ENCODE measurements at regions of chr10 and their contacts with region 1.

Region 1: DNA sequence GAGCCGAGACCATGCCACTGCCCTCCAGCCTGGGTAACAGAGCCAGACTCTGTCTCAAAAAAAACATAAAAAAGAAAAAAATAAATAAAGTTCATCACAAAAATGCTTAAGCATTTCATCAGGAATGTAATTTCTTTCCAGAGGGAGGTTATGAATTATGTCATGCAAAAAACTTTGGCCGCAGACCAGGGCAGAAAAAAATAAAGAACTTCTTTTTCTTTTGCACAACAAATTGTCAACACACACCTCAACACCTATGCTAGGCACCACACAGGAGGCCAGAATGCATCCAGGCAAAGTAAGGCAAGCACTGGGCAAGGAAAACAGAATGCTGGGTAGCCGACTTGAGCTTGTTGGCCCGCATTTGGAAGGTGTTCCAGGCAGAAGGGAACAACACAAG is 3.9 kb downstream of the C10orf62 start:
- DNase-seq: no peak
- H3K4me3 ChIP-seq: no peak overlapping the region
- H3K27ac ChIP-seq: peak overlapping the region; percentile 83 to 93
- H3K4me1 ChIP-seq: peaks cover 0 to 56% (median 34%) of the 10 kb centered on the region in 4 donors
- H3K27me3 ChIP-seq: no peaks in the 10 kb centered on the region
- CTCF ChIP-seq: no peak

Region 2: DNA sequence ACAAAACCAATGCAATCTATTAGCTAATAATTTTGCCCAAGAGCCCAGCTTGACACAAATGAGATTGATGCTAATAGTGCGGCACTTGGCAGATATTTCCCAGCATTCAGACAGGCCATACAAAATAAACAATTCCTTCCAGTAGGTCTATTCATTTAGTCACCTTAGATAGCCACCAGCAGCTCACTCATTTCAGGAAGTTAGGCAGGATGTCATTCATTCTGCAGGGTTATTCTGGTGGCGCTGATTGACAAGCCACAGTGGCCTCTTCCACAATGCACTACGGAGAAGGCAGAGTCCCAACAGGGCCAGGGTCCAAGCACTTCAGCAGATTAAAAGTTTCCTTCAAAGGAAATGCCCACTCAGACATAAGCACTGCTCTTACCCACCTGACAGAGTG is 928.9 kb before region 1 on chr10:
- intact Hi-C with region 1: loop called (anchors 5 kb)
- DNase-seq: no peak
- H3K4me3 ChIP-seq: no peak overlapping the region
- H3K27ac ChIP-seq: no peak overlapping the region
- H3K4me1 ChIP-seq: no peaks in the 10 kb centered on the region
- H3K27me3 ChIP-seq: no peaks in the 10 kb centered on the region
- CTCF ChIP-seq: no peak

Region 3: GRCh38 chr10:97623277-97623676 is 29.9 kb after region 1 on chr10:
- intact Hi-C with region 1: no loop called
- DNase-seq: no peak
- H3K4me3 ChIP-seq: no peak overlapping the region
- H3K27ac ChIP-seq: no peak overlapping the region
- H3K4me1 ChIP-seq: no peaks in the 10 kb centered on the region
- H3K27me3 ChIP-seq: no peaks in the 10 kb centered on the region
- CTCF ChIP-seq: no peak

Region 4: DNA sequence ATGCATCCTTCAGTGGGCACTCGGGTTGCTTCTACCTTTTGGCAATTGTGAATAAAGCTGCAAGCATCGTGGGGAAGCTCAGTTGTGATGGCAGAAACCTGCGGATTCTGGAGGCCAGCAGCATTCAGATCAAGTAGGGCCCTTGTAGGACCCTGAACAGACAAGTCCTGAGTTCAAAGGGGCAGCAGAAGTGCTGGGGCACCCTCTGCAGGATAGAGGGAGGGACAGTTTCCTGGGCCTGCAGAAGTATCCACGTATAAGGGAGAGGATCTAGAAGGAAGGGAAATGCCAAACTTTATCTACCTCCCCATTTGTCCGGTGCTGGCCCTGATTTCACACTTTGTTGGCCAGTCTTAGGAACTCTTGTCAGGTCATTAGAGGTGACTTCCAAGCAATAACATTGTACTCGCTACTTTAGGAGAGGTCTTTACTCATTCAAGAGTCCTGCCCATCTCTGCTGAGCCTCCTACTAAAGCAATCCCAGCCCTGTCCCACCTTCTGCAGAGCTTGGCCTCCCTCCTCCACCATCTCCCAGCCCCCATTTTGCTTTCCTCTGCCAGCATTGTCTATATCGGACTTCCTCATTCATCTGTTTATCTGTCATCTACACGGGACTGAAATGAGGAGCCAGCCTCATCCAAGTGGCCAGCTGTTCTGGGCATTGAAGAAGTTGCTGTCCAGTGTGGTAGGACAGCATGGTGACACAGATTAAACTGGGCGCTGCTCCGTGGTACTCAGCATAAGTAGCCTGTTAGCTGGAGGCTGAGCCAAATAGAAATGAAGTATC is 514.4 kb after region 1 on chr10:
- intact Hi-C with region 1: no loop called
- DNase-seq: no peak
- H3K4me3 ChIP-seq: no peak overlapping the region
- H3K27ac ChIP-seq: no peak overlapping the region
- H3K4me1 ChIP-seq: no peaks in the 10 kb centered on the region
- H3K27me3 ChIP-seq: peaks cover 0 to 11% of the 10 kb centered on the region in 2 donors
- CTCF ChIP-seq: no peak

Measured in tibial artery (tissue), 4 donors.